OCI-LY7 (cell line): ENCODE measurements at regions of chr2 and their contacts with region 1.

Region 1: GRCh38 chr2:8628230-8629209 is 53.3 kb upstream of the ID2 start:
- DNase-seq: peak; percentile 78
- H3K4me3 ChIP-seq: peak overlapping the region; percentile 70
- H3K27ac ChIP-seq: peak overlapping the region; percentile 82
- H3K4me1 ChIP-seq: peaks cover 69% of the 10 kb centered on the region
- CTCF ChIP-seq: peak; percentile 81

Region 2: GRCh38 chr2:8312861-8313830 is 315.4 kb before region 1 on chr2:
- CTCF ChIA-PET with region 1: no interaction called
- POLR2A ChIA-PET with region 1: no interaction called
- intact Hi-C with region 1: loop called (anchors 5 kb)
- DNase-seq: peak; percentile 80
- H3K4me3 ChIP-seq: peak overlapping the region; percentile 14
- H3K27ac ChIP-seq: peak overlapping the region; percentile 47
- H3K4me1 ChIP-seq: peaks cover 60% of the 10 kb centered on the region
- CTCF ChIP-seq: no peak

Region 3: GRCh38 chr2:8551622-8552074 is 76.9 kb before region 1 on chr2:
- CTCF ChIA-PET with region 1: interaction called, 3 read pairs
- POLR2A ChIA-PET with region 1: interaction called, 5 read pairs
- intact Hi-C with region 1: loop called (anchors 2 kb)
- DNase-seq: peak; percentile 78
- H3K4me3 ChIP-seq: peak overlapping the region; percentile 62
- H3K27ac ChIP-seq: peak overlapping the region; percentile 98
- H3K4me1 ChIP-seq: peaks cover 97% of the 10 kb centered on the region
- CTCF ChIP-seq: no peak; the same call in 1 of the 2 replicates

Region 4: DNA sequence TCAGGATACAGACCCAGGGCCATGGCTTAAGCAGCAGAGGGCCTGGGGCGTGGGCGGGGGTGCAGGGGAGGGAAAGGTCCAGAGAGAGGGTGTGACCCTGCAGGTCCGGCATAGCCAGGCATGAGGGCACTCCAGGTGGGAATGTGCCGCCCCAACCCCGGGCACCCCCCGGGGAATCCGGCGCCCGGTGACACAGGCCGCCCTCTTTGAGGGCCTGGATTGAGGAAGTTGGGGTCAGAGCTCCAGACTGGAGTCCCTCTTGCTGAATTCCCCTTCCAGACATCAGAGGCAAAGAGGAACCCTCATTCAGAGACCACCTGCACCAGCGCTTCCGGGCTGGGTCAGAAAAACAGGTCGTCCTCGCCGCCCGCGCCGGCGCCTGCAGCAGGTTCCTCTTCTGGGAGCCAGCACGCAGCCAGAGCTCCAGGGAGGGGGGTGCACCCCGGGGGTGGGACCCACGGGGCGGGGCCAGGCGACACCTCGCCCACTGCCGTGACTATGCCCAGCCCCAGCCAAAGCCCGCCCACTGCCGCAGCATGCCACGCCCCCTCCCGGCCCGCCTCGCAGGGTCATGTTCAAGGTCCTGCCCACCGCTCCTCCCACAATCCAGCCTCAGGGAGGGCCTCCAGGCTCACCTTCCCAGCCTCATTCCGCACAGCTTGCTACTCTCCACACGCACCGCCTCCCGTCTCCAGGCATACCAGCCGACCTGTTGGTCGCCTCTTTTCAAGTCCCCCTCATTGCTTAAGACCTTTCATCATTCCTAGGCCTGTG is 44.9 kb before region 1 on chr2:
- CTCF ChIA-PET with region 1: interaction called, 3 read pairs
- POLR2A ChIA-PET with region 1: interaction called, 9 read pairs
- intact Hi-C with region 1: loop called (anchors 1 kb)
- DNase-seq: peak; percentile 99
- H3K4me3 ChIP-seq: peak overlapping the region; percentile 61
- H3K27ac ChIP-seq: peak overlapping the region; percentile 98
- H3K4me1 ChIP-seq: peaks cover 97% of the 10 kb centered on the region
- CTCF ChIP-seq: no peak

Region 5: DNA sequence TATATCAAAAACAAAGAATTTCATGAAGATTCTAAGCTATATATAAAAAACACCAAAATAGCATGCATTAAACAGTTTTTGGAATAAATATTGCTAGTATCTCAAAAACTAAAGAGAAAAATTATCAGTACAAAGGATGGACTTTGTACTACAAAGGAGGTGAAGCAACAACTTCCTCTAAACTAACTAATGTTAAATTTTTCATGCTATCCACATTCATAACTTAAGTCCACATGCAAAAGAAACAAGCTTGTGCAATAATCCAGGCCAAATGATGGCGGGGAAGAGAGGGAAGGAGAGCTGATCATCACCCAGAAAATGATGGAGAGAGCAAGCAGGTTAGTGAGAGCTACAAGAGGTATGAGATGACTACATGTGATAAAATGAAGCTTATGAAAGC is 138.8 kb after region 1 on chr2:
- CTCF ChIA-PET with region 1: no interaction called
- POLR2A ChIA-PET with region 1: no interaction called
- intact Hi-C with region 1: no loop called
- DNase-seq: no peak
- H3K4me3 ChIP-seq: no peak overlapping the region
- H3K27ac ChIP-seq: no peak overlapping the region
- H3K4me1 ChIP-seq: no peaks in the 10 kb centered on the region
- CTCF ChIP-seq: no peak